ENCODE measurements at regions of chr2 and their contacts with region 1.

Region 1: GRCh38 chr2:146950361-146950760 is 894.5 kb upstream of the ACVR2A start:
- DNase-seq: no peak
- H3K4me3 ChIP-seq: no peak overlapping the region
- H3K27ac ChIP-seq: no peak overlapping the region
- H3K4me1 ChIP-seq: peaks cover 0 to 4% (median 2%) of the 10 kb centered on the region in 4 donors
- H3K27me3 ChIP-seq: no peaks in the 10 kb centered on the region
- CTCF ChIP-seq: no peak

Region 2: DNA sequence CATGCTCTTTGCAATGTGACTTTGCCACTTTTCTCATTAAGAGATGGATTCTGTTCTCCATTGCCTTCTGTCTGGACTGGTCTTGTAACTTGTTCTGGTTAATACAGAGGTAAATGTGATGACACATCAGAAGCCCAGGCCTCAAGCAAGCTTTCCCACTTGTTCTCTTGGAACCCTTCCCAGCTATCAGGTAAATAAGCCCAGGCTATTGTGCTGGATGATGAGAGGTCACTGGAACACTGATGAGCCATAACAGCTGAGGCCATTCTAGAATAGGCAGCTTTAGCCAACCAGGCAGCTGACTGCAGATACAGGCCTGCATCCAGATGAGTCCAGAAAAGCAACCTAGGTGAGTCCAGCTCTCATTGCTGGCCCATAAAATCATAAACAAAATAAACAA is 112.5 kb before region 1 on chr2:
- intact Hi-C with region 1: no loop called
- DNase-seq: no peak
- H3K4me3 ChIP-seq: no peak overlapping the region
- H3K27ac ChIP-seq: no peak overlapping the region
- H3K4me1 ChIP-seq: no peaks in the 10 kb centered on the region
- H3K27me3 ChIP-seq: no peaks in the 10 kb centered on the region
- CTCF ChIP-seq: no peak

Region 3: DNA sequence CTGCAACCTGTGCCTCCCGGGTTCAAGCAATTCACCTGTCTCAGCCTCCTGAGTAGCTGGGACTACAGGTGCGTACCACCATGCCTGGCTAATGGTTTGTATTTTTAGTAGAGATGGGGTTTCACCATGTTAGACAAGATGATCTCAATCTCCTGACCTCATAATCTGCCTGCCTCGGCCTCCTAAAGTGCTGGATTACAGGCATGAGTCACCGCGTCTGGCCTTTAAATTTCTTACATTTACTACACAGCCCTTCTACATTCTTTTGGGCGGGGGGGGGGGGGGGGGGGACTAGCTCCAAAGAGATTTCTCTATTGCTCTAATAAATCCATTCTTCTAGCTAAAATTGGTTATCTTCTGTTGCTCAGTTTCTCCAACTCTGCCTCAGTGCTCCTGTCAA is 70.5 kb before region 1 on chr2:
- intact Hi-C with region 1: loop called (anchors 2 kb)
- DNase-seq: no peak
- H3K4me3 ChIP-seq: no peak overlapping the region
- H3K27ac ChIP-seq: no peak overlapping the region
- H3K4me1 ChIP-seq: no peaks in the 10 kb centered on the region
- H3K27me3 ChIP-seq: no peaks in the 10 kb centered on the region
- CTCF ChIP-seq: no peak

Measured in tibial artery (tissue), 4 donors.